Naive thymus-derived CD8-positive, alpha-beta T cell (primary cell): ENCODE measurements at regions of chr7 and their contacts with region 1.

Region 1: GRCh38 chr7:2120251-2120660 is 112.5 kb downstream of the MAD1L1 start:
- DNase-seq: peak in 9 of 10 donors; percentile 12 to 80 (median 61)
- ATAC-seq: peak; percentile 93 to 95
- H3K4me3 Mint-ChIP-seq: peak overlapping the region; percentile 63 to 87 (median 80)
- H3K27ac Mint-ChIP-seq: peak overlapping the region; percentile 92 to 98 (median 96)
- H3K4me1 Mint-ChIP-seq: peaks cover 19 to 50% (median 34%) of the 10 kb centered on the region in 4 donors
- H3K27me3 Mint-ChIP-seq: no peaks in the 10 kb centered on the region

Region 2: DNA sequence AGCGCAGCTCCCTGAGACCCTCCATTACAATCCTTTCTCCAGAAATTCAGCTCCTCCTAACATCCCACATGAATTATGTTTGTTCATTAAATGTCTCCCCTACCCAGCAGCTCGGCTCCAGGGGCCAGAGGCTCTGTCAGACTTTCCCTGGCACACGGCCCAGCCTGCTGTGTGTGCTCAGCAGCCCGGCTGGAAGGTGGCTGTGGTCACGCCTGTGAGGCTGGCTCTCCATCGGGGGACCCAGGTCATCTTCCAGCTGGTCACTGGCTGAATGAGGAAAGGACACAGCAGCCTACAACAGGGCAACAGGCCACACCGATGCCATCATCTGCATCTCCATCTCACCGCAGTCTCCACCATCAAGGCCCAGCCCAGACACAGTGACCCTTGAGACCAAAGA is 107.3 kb before region 1 on chr7:
- POLR2A ChIA-PET with region 1: no interaction called
- DNase-seq: no peak
- ATAC-seq: no peak
- H3K4me3 Mint-ChIP-seq: no peak overlapping the region
- H3K27ac Mint-ChIP-seq: peak overlapping the region in 2 of 10 donors; percentile 16 to 33
- H3K4me1 Mint-ChIP-seq: peaks cover 5 to 17% (median 11%) of the 10 kb centered on the region in 4 donors
- H3K27me3 Mint-ChIP-seq: no peaks in the 10 kb centered on the region

Region 3: GRCh38 chr7:2100278-2101208 is 19.7 kb before region 1 on chr7:
- POLR2A ChIA-PET with region 1: interaction called, 10 read pairs
- DNase-seq: peak in 9 of 10 donors; percentile 30 to 79 (median 49)
- ATAC-seq: peak; percentile 58 to 59
- H3K4me3 Mint-ChIP-seq: peak overlapping the region in 9 of 10 donors; percentile 29 to 75 (median 61)
- H3K27ac Mint-ChIP-seq: peak overlapping the region; percentile 81 to 95 (median 91)
- H3K4me1 Mint-ChIP-seq: peaks cover 34 to 75% (median 72%) of the 10 kb centered on the region in 4 donors
- H3K27me3 Mint-ChIP-seq: no peaks in the 10 kb centered on the region

Region 4: DNA sequence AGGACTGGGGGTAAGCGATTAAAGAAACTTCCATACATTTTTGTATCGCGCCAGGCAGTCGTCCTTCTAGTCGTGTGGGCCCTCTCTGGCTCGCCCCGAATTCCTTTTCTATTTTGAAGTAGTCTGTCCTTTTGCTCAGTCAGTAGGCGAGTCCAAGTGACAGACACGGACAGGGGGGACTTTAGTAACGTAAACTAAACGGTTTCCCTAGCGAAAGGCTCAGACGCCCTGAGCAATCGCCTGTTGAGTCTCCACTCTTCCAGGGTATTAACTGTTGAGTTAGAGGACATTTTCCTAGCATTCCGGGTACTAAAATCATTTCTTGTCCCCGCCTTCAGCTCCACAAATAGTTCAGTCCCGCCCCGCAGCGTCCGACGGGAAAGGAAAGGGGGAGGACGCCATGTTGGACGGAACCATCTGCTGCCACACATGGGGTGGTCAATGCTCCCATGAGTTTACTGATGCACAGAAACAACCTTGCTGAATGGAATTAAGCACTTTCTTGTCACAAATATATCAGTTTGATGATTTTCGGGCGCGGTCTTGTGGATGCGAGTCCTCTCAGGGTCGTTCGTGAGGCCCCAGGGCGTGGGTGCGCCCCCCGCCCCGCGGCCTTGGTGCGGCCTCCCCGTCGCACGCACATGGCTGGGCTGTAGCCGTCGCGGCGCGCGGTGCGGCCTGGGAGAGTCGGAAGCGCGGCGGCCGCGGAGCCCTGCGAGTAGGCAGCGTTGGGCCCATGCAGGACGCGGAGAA is 234.1 kb after region 1 on chr7 and contains the start of gene EIF3B:
- POLR2A ChIA-PET with region 1: interaction called, 11 read pairs
- DNase-seq: peak; percentile 79 to 100 (median 89)
- ATAC-seq: peak; percentile 89 to 90
- H3K4me3 Mint-ChIP-seq: peak within 1 kb of the TSS; percentile 88 to 99 (median 94)
- H3K27ac Mint-ChIP-seq: peak within 1 kb of the TSS; percentile 99 to 100 (median 100)
- H3K4me1 Mint-ChIP-seq: peaks cover 9 to 51% (median 37%) of the 10 kb centered on the region in 4 donors
- H3K27me3 Mint-ChIP-seq: no peaks in the 10 kb centered on the region
- polyA plus RNA-seq, gene EIF3B: 96.5 to 164 (median 114) TPM